Activated CD4-positive, alpha-beta memory T cell treated with anti-CD3 and anti-CD28 coated beads for 36 hours (primary cell): ENCODE measurements at regions of chr10 and their contacts with region 1.

Region 1: GRCh38 chr10:72107325-72108003 is 19.1 kb upstream of the SPOCK2 start:
- DNase-seq: no peak
- H3K4me3 Mint-ChIP-seq: peak overlapping the region; percentile 76
- H3K27ac Mint-ChIP-seq: peak overlapping the region; percentile 97
- H3K4me1 Mint-ChIP-seq: peaks cover 69% of the 10 kb centered on the region
- H3K27me3 Mint-ChIP-seq: no peaks in the 10 kb centered on the region

Region 2: DNA sequence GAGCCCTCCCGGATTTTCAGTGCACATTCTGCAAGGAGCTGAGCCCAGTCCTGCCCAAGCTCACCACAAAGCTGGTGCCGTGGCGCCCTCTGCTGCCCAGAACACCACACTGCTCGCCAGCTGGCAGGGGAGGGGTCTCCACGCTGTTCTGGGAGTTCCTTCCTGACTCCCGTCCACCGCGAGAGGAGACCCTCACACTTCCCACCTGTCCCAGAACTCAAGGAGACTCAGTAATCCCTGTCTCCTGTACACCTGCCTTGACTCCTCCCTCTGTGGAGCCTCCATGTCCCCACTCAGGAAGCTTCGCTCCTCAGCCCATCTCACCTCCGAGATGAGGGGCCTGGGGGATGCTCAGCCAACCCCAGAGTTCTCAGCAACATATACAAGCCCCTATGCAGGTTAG is 399.2 kb before region 1 on chr10:
- CTCF ChIA-PET with region 1: no interaction called
- POLR2A ChIA-PET with region 1: no interaction called
- intact Hi-C with region 1: no loop called
- DNase-seq: peak; percentile 78
- H3K4me3 Mint-ChIP-seq: no peak overlapping the region
- H3K27ac Mint-ChIP-seq: no peak overlapping the region
- H3K4me1 Mint-ChIP-seq: peaks cover 35% of the 10 kb centered on the region
- H3K27me3 Mint-ChIP-seq: no peaks in the 10 kb centered on the region

Region 3: GRCh38 chr10:72080042-72080975 is 27.2 kb before region 1 on chr10:
- CTCF ChIA-PET with region 1: no interaction called
- POLR2A ChIA-PET with region 1: no interaction called
- intact Hi-C with region 1: loop called (anchors 1 kb)
- DNase-seq: no peak
- H3K4me3 Mint-ChIP-seq: peak overlapping the region; percentile 1
- H3K27ac Mint-ChIP-seq: peak overlapping the region; percentile 86
- H3K4me1 Mint-ChIP-seq: peaks cover 92% of the 10 kb centered on the region
- H3K27me3 Mint-ChIP-seq: no peaks in the 10 kb centered on the region

Region 4: GRCh38 chr10:72088889-72089575 is 18.4 kb before region 1 on chr10:
- CTCF ChIA-PET with region 1: interaction called, 8 read pairs
- POLR2A ChIA-PET with region 1: interaction called, 16 read pairs
- intact Hi-C with region 1: loop called (anchors 1 kb)
- DNase-seq: peak; percentile 76
- H3K4me3 Mint-ChIP-seq: peak overlapping the region; percentile 100
- H3K27ac Mint-ChIP-seq: peak overlapping the region; percentile 99
- H3K4me1 Mint-ChIP-seq: peaks cover 46% of the 10 kb centered on the region
- H3K27me3 Mint-ChIP-seq: no peaks in the 10 kb centered on the region

Region 5: GRCh38 chr10:72162978-72163377 is 55.5 kb after region 1 on chr10:
- CTCF ChIA-PET with region 1: no interaction called
- POLR2A ChIA-PET with region 1: no interaction called
- intact Hi-C with region 1: loop called (anchors 5 kb)
- DNase-seq: no peak
- H3K4me3 Mint-ChIP-seq: no peak overlapping the region
- H3K27ac Mint-ChIP-seq: peak overlapping the region; percentile 65
- H3K4me1 Mint-ChIP-seq: peaks cover 26% of the 10 kb centered on the region
- H3K27me3 Mint-ChIP-seq: no peaks in the 10 kb centered on the region